Endothelial cell of umbilical vein (primary cell): ENCODE measurements at regions of chr6 and their contacts with region 1.

Region 1: GRCh38 chr6:97437087-97437486 is 154.1 kb upstream of the MMS22L start:
- DNase-seq: peak; percentile 34
- H3K4me3 ChIP-seq: no peak overlapping the region
- H3K27ac ChIP-seq: no peak overlapping the region
- H3K4me1 ChIP-seq: no peaks in the 10 kb centered on the region
- H3K27me3 ChIP-seq: peaks cover 4 to 16% of the 10 kb centered on the region in 2 experiments
- CTCF ChIP-seq: peak; percentile 64 to 69
- POLR2A ChIP-seq: no peak

Region 2: DNA sequence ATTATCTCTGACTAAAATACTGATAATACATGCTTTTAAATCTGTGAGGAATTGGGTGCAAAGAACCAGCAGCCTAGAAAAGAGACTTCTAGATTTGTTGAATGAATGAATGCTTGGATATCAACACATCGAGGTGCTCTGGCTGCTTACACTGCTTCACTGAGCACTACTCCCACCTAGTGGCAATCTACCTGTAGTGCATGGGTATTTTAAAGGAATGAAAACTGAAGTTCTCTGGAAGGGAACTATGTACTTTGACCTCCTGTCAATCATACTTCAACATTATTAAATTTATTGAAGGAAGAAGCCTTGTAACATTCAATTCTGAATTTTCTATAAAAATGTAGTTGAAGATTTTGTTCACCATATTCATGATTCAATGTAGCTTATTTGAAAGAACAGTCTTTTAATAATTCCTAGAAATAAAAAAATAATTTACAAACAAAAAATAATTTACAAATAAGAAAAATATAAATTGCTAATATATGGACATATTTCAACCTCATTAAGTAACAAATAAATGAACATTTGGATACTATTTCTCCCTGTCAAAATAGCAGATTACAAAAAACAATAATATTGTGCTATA is 42.8 kb before region 1 on chr6:
- CTCF ChIA-PET with region 1: no interaction called
- POLR2A ChIA-PET with region 1: no interaction called
- dilution Hi-C with region 1: no loop called
- intact Hi-C with region 1: loop called (anchors 5 kb)
- DNase-seq: peak; percentile 75
- H3K4me3 ChIP-seq: no peak overlapping the region
- H3K27ac ChIP-seq: no peak overlapping the region
- H3K4me1 ChIP-seq: no peaks in the 10 kb centered on the region
- H3K27me3 ChIP-seq: peaks cover 4 to 5% of the 10 kb centered on the region in 2 experiments
- CTCF ChIP-seq: peak; percentile 71 to 73
- POLR2A ChIP-seq: no peak

Region 3: GRCh38 chr6:97765480-97765879 is 328.4 kb after region 1 on chr6:
- CTCF ChIA-PET with region 1: no interaction called
- POLR2A ChIA-PET with region 1: no interaction called
- dilution Hi-C with region 1: no loop called
- intact Hi-C with region 1: no loop called
- DNase-seq: no peak
- H3K4me3 ChIP-seq: no peak overlapping the region
- H3K27ac ChIP-seq: no peak overlapping the region
- H3K4me1 ChIP-seq: no peaks in the 10 kb centered on the region
- H3K27me3 ChIP-seq: no peaks in the 10 kb centered on the region
- CTCF ChIP-seq: no peak
- POLR2A ChIP-seq: no peak